ENCODE measurements at regions of chr11 and their contacts with region 1.

Region 1: GRCh38 chr11:10933455-10934292 is 75.8 kb upstream of the ZBED5 start:
- DNase-seq: peak; percentile 90 to 94
- H3K4me3 ChIP-seq: peak overlapping the region; percentile 41 to 42
- H3K27ac ChIP-seq: peak overlapping the region; percentile 91 to 99
- H3K4me1 ChIP-seq: no peaks in the 10 kb centered on the region
- H3K27me3 ChIP-seq: no peaks in the 10 kb centered on the region
- CTCF ChIP-seq: peak; percentile 91 to 97 (median 95)
- POLR2A ChIP-seq: peak in 1 of 2 donors; percentile 44

Region 2: GRCh38 chr11:10973416-10973815 is 39.7 kb after region 1 on chr11:
- intact Hi-C with region 1: no loop called
- DNase-seq: no peak
- H3K4me3 ChIP-seq: no peak overlapping the region
- H3K27ac ChIP-seq: peak overlapping the region in 1 of 2 donors; percentile 24
- H3K4me1 ChIP-seq: no peaks in the 10 kb centered on the region
- H3K27me3 ChIP-seq: no peaks in the 10 kb centered on the region
- CTCF ChIP-seq: no peak
- POLR2A ChIP-seq: no peak

Region 3: DNA sequence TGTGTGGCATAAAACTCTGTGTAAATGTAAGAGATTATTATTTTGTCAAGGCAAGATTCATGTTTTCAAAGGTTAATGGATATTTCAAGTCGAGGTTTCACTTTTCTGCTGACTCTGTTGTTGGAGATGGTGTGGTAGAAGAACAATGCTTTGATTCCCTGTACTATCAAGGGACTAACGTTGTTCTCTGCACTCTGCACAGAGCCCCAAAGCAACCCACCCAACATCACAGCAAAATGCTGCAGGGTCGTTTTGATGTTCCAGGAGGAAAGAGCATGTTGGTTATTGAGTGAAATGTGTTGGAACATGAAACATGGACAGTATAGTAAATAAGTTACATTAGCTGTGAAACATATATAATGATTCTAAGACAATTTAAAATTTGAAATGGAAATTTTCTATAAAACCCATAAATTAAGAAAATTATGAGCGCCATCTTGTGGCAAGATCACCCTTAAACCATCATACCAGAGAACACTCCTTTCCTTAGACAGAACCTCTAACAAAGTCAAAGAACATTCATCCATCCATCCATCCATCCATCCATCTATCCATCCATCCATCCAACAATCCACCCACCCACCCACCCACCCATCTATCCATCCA is 88.6 kb after region 1 on chr11:
- intact Hi-C with region 1: loop called (anchors 5 kb)
- DNase-seq: no peak
- H3K4me3 ChIP-seq: no peak overlapping the region
- H3K27ac ChIP-seq: no peak overlapping the region
- H3K4me1 ChIP-seq: no peaks in the 10 kb centered on the region
- H3K27me3 ChIP-seq: no peaks in the 10 kb centered on the region
- CTCF ChIP-seq: peak; percentile 25 to 52 (median 44)
- POLR2A ChIP-seq: no peak

Region 4: GRCh38 chr11:11621573-11622319 is 688.1 kb after region 1 on chr11 and contains the start of gene GALNT18:
- intact Hi-C with region 1: loop called (anchors 10 kb)
- DNase-seq: peak; percentile 89 to 92
- H3K4me3 ChIP-seq: peak within 1 kb of the TSS; percentile 57
- H3K27ac ChIP-seq: peak within 1 kb of the TSS; percentile 67 to 72
- H3K4me1 ChIP-seq: no peaks in the 10 kb centered on the region
- H3K27me3 ChIP-seq: no peaks in the 10 kb centered on the region
- CTCF ChIP-seq: peak; percentile 38 to 70 (median 56)
- POLR2A ChIP-seq: peak; percentile 79 to 87
- total RNA-seq, gene GALNT18: 21.4 to 35.1 (median 27.3) TPM

Region 5: DNA sequence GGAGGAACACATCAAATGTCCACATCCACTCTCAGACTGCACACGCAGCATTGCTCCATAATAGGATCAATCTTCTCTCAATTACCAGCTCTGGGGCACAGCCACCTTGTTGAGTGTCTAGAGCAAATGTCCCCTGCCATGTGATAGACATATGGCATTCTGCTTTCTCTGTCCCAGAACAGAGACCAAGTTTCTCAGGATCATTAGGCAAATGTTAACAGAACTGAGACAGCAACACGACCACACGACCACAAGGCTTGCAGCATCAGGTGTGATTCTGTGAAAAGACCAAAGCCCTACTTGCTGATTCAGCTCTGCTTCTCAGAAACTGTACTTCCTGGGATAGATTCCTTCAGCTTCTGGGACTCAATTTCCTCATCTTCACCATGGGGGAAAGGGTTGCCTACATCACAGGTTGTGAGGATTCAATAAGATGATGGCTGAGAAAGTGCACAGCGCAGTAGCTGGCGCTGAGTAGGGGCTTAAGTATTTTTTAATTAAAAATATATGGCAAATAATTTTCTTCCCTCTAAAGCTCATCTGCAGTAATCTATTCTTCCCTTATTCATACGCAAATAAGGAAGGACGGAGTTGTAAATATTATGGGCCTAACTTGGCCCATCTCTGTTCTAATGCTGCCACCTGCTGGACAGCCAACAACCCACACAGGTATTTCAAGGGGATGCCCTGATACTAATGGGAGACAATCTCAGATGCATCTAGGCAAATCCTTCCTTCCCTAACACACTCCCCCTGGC is 853.8 kb after region 1 on chr11:
- intact Hi-C with region 1: loop called (anchors 10 kb)
- DNase-seq: peak; percentile 78 to 82
- H3K4me3 ChIP-seq: no peak overlapping the region
- H3K27ac ChIP-seq: peak overlapping the region in 1 of 2 donors; percentile 10
- H3K4me1 ChIP-seq: no peaks in the 10 kb centered on the region
- H3K27me3 ChIP-seq: no peaks in the 10 kb centered on the region
- CTCF ChIP-seq: peak; percentile 86 to 94 (median 88)
- POLR2A ChIP-seq: no peak